A673 (cell line): ENCODE measurements at regions of chr21 and their contacts with region 1.

Region 1: GRCh38 chr21:37711836-37712568 is 204.3 kb downstream of the KCNJ6 start:
- DNase-seq: peak; percentile 77
- H3K4me3 ChIP-seq: no peak overlapping the region
- H3K27ac ChIP-seq: no peak overlapping the region
- H3K4me1 ChIP-seq: peaks cover 5% of the 10 kb centered on the region
- H3K27me3 ChIP-seq: peaks cover 8% of the 10 kb centered on the region
- CTCF ChIP-seq: peak; percentile 83

Region 2: DNA sequence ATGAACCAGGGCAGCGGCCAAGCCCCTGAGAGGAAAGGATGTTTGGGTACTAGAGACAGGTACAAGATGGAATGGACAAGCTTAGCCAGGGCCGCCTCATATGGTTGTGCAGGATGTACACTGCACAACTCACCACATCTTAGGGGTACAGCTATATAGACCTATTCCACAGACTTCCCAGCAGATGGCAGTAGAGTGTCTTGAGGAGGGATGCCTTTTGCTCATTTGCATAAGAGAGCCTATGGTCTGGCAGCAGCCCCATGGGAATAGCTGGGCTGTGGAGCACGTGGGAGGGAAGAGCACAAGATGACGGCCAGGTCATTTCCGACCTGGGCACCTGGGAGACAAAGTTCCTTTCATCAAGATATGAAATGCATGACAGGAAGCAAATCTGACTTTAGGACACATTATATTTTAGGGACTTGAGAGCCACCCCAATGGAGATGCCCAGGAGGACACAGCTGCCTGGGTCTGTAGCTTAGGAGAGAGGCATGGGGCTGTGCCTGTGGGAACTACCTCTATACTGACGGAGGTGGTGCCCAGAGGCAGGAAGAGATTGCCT is 11.3 kb before region 1 on chr21:
- CTCF ChIA-PET with region 1: interaction called, 21 read pairs
- POLR2A ChIA-PET with region 1: no interaction called
- intact Hi-C with region 1: no loop called
- DNase-seq: peak; percentile 86
- H3K4me3 ChIP-seq: no peak overlapping the region
- H3K27ac ChIP-seq: no peak overlapping the region
- H3K4me1 ChIP-seq: no peaks in the 10 kb centered on the region
- H3K27me3 ChIP-seq: peaks cover 49% of the 10 kb centered on the region
- CTCF ChIP-seq: peak; percentile 83

Region 3: DNA sequence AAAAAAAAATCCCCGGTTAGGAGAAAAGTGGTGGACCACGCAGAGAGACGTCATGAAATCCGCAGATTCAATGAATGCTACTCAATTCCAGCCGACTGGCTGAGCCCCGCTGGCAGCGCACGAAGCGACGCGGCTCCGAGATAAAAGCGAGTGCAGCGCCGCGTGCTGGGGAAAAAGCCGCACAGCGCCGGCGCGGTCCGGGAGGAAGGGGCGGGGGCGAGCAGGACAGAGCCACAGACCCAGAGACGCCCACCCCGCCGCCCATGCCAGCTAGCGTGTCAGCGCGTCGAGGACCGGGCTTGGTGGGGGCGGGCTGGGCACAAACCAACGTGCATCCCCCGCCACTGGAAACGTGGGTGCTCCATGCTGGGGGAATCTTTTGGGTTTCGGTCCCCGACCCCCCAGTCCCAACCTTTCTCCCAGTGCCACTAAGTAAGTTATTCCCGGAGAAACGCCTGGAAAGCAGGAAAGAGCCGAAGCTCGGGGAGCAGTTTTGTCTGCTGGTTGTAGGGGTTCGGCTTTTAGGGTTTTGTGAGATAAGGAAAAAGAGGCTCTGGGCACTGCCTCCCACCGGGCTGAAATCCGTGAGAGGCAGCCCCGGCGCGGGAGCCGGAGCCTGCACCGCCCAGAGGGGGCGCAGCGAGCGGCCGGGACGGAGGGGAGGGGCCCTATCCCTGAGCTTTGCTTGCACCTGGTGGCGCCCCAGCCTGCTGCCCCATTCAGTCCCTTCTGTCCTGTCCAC is 204.5 kb after region 1 on chr21 and contains the start of gene KCNJ6:
- CTCF ChIA-PET with region 1: interaction called, 4 read pairs
- POLR2A ChIA-PET with region 1: no interaction called
- intact Hi-C with region 1: loop called (anchors 5 kb)
- DNase-seq: peak; percentile 73
- H3K4me3 ChIP-seq: no peak within 1 kb of the TSS
- H3K27ac ChIP-seq: no peak within 1 kb of the TSS
- H3K4me1 ChIP-seq: no peaks in the 10 kb centered on the region
- H3K27me3 ChIP-seq: peaks cover 78% of the 10 kb centered on the region
- CTCF ChIP-seq: peak; percentile 68
- total RNA-seq, gene KCNJ6: not detected in 2 replicates

Region 4: GRCh38 chr21:38267136-38267755 is 555.2 kb after region 1 on chr21:
- CTCF ChIA-PET with region 1: interaction called, 10 read pairs
- POLR2A ChIA-PET with region 1: no interaction called
- intact Hi-C with region 1: no loop called
- DNase-seq: no peak
- H3K4me3 ChIP-seq: no peak overlapping the region
- H3K27ac ChIP-seq: no peak overlapping the region
- H3K4me1 ChIP-seq: no peaks in the 10 kb centered on the region
- H3K27me3 ChIP-seq: peaks cover 18% of the 10 kb centered on the region
- CTCF ChIP-seq: no peak

Region 5: DNA sequence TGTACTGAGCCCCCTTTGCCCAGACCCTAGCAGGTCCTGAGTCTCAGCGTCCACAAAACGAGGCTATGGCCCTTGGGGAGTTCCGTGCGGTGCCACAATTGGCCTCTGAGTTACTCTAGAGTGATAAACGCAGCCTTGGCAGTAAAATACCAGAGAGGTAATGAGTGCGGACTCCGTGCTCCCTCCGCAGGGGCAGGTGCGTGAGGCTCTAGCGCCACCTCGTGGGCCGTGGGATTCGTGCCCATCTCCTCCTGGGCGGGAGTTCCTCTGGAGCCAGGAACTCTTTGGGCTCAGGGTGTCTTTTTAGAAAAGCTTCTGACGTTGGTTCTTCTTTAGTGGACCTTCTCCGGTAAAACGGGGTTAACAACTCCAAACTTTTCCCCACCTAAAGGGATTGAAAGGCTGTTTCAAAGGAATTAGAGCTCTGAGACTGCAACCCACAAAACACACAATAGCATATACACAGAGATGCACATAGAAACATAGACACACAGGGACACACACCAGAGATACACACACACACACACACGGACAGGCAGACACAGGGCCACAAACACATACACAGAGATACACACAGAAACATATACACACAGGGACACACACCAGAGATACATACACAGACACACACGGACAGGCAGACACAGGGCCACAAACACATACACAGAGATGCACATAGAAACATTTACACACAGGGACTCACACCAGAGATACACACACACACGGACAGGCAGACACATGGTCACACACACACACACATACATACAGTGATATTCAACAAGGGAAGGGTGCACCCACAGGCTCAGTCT is 644.2 kb after region 1 on chr21:
- CTCF ChIA-PET with region 1: interaction called, 7 read pairs
- POLR2A ChIA-PET with region 1: no interaction called
- intact Hi-C with region 1: loop called (anchors 5 kb)
- DNase-seq: peak; percentile 78
- H3K4me3 ChIP-seq: no peak overlapping the region
- H3K27ac ChIP-seq: no peak overlapping the region
- H3K4me1 ChIP-seq: no peaks in the 10 kb centered on the region
- H3K27me3 ChIP-seq: peaks cover 14% of the 10 kb centered on the region
- CTCF ChIP-seq: peak; percentile 94